ENCODE measurements at regions of chr13 and their contacts with region 1.

Region 1: DNA sequence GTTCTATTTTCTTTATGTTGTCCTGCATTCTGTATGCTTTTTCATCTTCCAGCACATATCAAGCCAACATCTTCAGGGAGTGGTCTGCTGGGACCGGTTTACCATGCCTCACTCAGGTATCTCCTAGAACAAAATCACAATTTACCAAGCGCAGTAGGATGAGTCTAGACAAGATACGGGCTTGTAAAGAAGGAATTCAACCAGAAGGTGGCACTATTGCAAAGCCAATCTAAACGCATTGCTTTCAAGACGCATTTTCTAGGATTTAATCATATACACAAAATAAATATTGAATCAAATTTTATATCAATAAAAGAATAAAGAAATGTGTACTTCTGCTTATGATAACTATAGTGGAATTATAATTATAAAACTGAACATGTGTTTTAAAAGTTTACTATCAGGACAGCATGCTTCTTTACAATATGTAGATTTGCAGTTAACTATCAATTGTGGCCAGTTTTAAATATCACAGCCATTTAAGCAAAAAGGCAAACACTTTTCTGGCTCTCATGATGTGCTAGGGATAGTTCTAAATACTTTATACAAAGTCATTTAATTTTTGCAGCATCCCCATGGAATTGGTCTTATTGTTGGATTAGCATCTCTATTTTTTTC is 16.1 kb upstream of the TPP2 start:
- DNase-seq: no peak
- ATAC-seq: peak in 3 of 4 donors; percentile 48 to 67 (median 66)
- H3K4me3 ChIP-seq: no peak overlapping the region
- H3K27ac ChIP-seq: no peak overlapping the region
- H3K4me1 ChIP-seq: no peaks in the 10 kb centered on the region
- H3K27me3 ChIP-seq: peaks cover 0 to 10% (median 0%) of the 10 kb centered on the region in 9 donors
- CTCF ChIP-seq: peak; percentile 58 to 85 (median 76)
- POLR2A ChIP-seq: no peak

Region 2: DNA sequence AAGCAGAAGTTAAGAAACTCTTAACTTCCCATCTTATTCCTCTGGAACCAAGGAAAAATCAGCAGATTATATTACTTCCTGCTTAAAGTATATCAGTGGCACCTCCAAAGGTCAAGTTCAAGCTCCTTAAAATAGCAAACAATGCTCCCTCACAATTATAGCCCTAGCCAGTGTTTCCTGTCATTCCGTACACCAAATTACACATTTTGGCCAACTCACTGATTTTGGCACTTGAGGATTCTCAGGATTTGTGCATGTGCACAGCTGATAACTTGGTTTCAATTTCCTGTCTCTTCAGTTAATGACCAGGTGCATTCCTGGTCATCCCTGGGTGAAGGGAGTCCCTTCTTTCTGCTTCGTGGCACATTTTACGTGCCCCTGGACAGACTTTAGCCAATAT is 58.1 kb after region 1 on chr13:
- intact Hi-C with region 1: no loop called
- DNase-seq: no peak
- ATAC-seq: no peak
- H3K4me3 ChIP-seq: no peak overlapping the region
- H3K27ac ChIP-seq: no peak overlapping the region
- H3K4me1 ChIP-seq: peaks cover 0 to 30% (median 3%) of the 10 kb centered on the region in 12 donors
- H3K27me3 ChIP-seq: no peaks in the 10 kb centered on the region
- CTCF ChIP-seq: no peak
- POLR2A ChIP-seq: no peak

Region 3: DNA sequence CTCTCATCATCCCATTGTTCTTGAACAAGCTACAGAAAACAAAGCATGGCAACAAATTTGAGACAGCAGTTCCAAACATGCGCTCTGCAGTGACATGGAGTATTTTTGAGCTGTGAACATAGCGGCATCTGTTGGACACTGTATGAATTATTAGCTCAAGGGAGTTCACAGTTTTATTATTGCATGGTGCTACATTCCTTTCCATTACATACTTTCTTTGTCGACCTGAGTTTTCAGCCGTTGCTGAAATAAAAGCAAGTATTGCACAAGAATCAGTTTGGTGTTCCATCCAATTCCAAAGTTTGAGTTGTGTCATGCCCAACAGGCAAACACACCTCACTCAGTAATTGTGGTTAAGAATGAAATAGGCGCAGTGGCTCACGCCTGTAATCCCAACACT is 144.3 kb after region 1 on chr13:
- intact Hi-C with region 1: loop called in 4 of 10 experiments (anchors 5 kb)
- DNase-seq: no peak
- ATAC-seq: peak in 3 of 4 donors; percentile 42 to 72 (median 49)
- H3K4me3 ChIP-seq: no peak overlapping the region
- H3K27ac ChIP-seq: no peak overlapping the region
- H3K4me1 ChIP-seq: peaks cover 0 to 5% (median 0%) of the 10 kb centered on the region in 12 donors
- H3K27me3 ChIP-seq: no peaks in the 10 kb centered on the region
- CTCF ChIP-seq: peak in 8 of 12 donors; percentile 5 to 42 (median 26)
- POLR2A ChIP-seq: no peak

Region 4: DNA sequence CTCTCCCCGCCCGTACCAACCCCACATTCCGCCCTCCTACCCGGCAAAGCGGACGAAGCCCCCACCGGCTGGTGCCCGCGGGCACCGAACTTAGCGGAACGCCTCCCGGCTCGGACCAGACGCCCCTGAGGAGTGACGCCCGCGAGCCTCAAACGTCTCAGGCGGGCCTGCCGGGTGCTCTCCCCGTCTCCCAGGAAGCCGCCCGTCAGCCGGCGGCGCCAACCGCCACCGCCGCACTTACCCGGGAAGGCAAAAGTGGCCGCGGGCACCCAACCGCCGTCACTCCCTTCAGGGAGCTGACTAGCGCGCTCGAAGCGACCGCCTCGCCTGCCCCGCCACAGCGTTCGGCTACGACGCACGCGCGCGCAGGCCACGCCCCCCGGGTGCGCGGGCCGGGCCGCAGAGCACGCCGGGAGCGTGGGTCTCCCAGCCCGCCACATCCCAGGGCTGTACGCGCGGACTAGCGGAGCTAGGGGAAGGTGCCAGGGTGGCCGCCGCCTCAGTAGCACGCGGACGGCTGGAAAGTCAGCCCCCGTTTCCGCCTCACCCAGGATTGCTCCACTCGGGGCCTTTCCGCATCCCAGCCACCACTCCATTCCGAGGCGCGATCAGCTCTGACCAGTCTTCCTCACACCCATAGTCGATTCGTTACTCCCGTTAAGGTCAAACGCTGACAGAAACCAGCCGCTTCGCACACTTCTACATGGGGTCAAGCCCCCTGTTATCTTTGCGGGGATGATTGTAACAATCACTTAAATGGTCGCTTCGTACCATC is 193.0 kb after region 1 on chr13 and contains the start of gene TEX30:
- intact Hi-C with region 1: loop called in 1 of 10 experiments (anchors 10 kb)
- DNase-seq: peak; percentile 85 to 94 (median 88)
- ATAC-seq: peak; percentile 94 to 100 (median 100)
- H3K4me3 ChIP-seq: peak within 1 kb of the TSS; percentile 51 to 87 (median 81)
- H3K27ac ChIP-seq: peak within 1 kb of the TSS; percentile 45 to 90 (median 82)
- H3K4me1 ChIP-seq: peaks cover 0 to 23% (median 7%) of the 10 kb centered on the region in 12 donors
- H3K27me3 ChIP-seq: no peaks in the 10 kb centered on the region
- CTCF ChIP-seq: peak in 2 of 12 donors; percentile 16 to 17
- POLR2A ChIP-seq: peak in 1 of 2 donors; percentile 90
- total RNA-seq, gene TEX30: 6.0 to 13.7 (median 9.8) TPM

Region 5: GRCh38 chr13:102800145-102801041 is 219.7 kb after region 1 on chr13:
- intact Hi-C with region 1: loop called in 1 of 10 experiments (anchors 1 kb)
- DNase-seq: peak; percentile 84 to 90 (median 87)
- ATAC-seq: peak; percentile 66 to 87 (median 82)
- H3K4me3 ChIP-seq: peak overlapping the region; percentile 65 to 95 (median 82)
- H3K27ac ChIP-seq: peak overlapping the region; percentile 72 to 96 (median 91)
- H3K4me1 ChIP-seq: peaks cover 0 to 47% (median 30%) of the 10 kb centered on the region in 12 donors
- H3K27me3 ChIP-seq: peaks cover 0 to 10% (median 0%) of the 10 kb centered on the region in 9 donors
- CTCF ChIP-seq: peak; percentile 70 to 89 (median 82)
- POLR2A ChIP-seq: peak in 1 of 2 donors; percentile 26